Activated T-helper 2 cell treated with anti-CD3 and anti-CD28 coated beads, Interferon-gamma antibody, Interleukin-2, Interleukin-4, amounts not matched to agents 10 μg/mL and 5 μg/mL and 100 μg/mL, durations not matched to agents 14 hours and 24 hours and 36 hours (primary cell): ENCODE measurements at regions of chr3 and their contacts with region 1.

Region 1: DNA sequence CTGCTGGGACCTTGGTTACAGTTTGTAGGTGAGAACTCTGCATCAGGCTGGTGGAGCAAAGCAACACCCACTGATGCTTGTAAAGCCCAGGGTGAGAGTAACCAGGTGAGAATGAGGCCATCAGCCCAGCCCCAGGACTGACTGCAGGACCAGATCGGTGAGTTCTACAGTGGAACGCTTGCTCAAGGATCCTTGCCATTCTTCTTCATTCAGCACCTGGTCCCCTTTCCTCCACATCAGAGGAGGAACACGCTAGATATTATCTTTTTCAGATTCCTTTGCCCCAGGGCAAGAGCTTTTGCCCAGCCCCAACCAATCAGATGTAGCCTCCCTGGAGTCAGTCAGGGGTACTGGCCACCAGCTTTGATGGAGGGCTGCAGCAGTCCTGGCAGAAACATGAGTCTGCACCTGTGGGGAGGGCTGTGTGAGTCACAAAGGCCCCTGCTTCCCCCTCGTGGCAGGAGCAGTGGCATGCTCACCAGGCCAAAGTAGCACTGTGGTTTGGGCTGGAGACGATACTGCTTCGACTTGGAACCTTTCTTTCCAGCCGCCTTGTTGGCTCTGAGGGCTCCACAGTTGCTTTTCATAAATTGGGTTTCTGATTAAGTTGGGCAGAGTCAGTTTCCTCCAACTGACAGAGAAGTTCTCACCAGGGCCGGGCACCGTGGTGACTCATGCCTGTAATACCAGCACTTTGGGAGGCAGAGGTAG is 3.5 kb upstream of the SHISA5 start:
- DNase-seq: peak; percentile 63
- H3K4me3 Mint-ChIP-seq: no peak overlapping the region
- H3K27ac Mint-ChIP-seq: peak overlapping the region; percentile 1
- H3K4me1 Mint-ChIP-seq: peaks cover 39% of the 10 kb centered on the region
- H3K27me3 Mint-ChIP-seq: no peaks in the 10 kb centered on the region

Region 2: DNA sequence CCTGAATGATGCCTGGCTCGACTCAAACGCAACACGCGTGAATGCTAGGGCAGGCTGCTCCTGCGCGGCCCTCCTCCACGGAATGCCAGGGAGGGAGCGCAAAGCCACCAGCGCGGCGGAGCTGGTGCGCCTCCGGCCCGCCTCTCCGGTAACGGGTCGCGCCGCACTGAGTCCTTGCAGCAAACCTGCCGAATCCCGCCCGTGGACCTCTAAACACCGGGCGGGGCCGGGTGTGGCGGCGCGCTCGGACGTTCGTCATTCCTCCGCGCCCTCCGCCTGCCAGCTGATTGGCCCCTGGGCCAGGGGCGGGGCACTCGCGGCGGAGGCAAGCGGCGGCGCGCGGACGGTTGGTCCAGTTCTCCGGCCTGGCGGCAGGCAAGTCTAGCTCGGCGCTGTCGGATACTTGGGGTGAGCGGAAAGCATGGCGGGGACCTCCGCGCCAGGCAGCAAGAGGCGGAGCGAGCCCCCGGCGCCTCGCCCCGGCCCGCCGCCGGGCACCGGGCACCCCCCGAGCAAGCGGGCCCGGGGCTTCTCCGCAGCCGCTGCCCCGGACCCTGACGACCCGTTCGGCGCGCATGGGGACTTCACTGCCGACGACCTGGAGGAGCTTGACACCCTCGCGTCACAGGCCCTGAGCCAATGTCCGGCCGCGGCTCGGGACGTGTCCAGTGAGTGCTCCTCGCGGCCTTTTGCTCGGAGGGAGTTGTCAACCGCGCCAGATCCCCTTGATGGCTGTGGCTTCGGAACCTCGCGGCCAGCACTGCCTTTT is 60.9 kb before region 1 on chr3 and contains the start of gene ATRIP:
- intact Hi-C with region 1: loop called (anchors 5 kb)
- DNase-seq: peak; percentile 87
- H3K4me3 Mint-ChIP-seq: peak within 1 kb of the TSS; percentile 94
- H3K27ac Mint-ChIP-seq: peak within 1 kb of the TSS; percentile 81
- H3K4me1 Mint-ChIP-seq: peaks cover 30% of the 10 kb centered on the region
- H3K27me3 Mint-ChIP-seq: no peaks in the 10 kb centered on the region
- total RNA-seq, gene ATRIP: 16.9 and 17.5 TPM in 2 replicates